Dorsolateral prefrontal cortex (tissue), 120 donors: ENCODE measurements at regions of chr11 and their contacts with region 1.

Region 1: DNA sequence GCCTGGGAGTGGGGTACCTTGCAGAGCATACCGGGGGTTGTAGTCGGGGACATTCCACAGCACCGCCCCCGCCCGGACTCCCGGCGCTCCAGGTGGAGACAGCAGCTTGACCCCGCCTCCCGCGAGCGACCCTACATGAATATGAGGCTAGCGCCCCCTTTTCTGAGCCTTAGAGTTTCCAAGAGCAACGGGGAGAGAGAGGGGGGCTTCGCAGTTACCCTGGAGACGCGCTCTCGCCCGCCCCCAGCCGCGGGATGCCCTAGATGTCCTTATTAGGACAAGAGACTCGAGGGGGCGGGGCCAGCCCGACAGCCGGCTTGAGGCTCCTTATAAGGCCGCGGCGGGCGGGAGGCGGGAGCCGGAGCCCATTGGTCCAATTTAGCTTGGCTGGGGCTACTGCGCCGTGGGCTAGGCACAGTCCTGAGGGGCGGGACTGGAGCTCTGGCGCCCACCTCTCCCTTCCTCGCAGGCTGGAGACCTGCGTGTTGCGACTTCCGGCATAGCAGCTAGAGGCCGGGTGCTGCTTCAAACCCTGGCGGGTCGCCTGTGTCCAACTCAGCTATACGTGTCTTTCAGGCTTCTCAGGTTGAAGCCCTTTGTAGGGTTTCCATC is 927 bp upstream of the MUS81 start:
- DNase-seq: peak; percentile 94 to 99 (median 98)
- H3K4me3 ChIP-seq: peak overlapping the region; percentile 65 to 99 (median 93)
- H3K27ac ChIP-seq: peak overlapping the region; percentile 70 to 99 (median 97)
- H3K27me3 ChIP-seq: no peaks in the 10 kb centered on the region
- CTCF ChIP-seq: peak in 28 of 56 donors; percentile 6 to 56 (median 34)

Region 2: GRCh38 chr11:65833297-65834030 is 25.8 kb before region 1 on chr11 and contains the start of gene SNX32:
- intact Hi-C with region 1: loop called in 1 of 2 experiments (anchors 2 kb)
- DNase-seq: peak; percentile 96 to 99 (median 98)
- H3K4me3 ChIP-seq: peak within 1 kb of the TSS; percentile 48 to 91 (median 74)
- H3K27ac ChIP-seq: peak within 1 kb of the TSS in 34 of 59 donors; percentile 11 to 85 (median 62)
- H3K27me3 ChIP-seq: no peaks in the 10 kb centered on the region
- CTCF ChIP-seq: peak in 16 of 56 donors; percentile 7 to 51 (median 30)
- total RNA-seq, gene SNX32: 18.6 to 78.2 (median 41.0) TPM

Region 3: DNA sequence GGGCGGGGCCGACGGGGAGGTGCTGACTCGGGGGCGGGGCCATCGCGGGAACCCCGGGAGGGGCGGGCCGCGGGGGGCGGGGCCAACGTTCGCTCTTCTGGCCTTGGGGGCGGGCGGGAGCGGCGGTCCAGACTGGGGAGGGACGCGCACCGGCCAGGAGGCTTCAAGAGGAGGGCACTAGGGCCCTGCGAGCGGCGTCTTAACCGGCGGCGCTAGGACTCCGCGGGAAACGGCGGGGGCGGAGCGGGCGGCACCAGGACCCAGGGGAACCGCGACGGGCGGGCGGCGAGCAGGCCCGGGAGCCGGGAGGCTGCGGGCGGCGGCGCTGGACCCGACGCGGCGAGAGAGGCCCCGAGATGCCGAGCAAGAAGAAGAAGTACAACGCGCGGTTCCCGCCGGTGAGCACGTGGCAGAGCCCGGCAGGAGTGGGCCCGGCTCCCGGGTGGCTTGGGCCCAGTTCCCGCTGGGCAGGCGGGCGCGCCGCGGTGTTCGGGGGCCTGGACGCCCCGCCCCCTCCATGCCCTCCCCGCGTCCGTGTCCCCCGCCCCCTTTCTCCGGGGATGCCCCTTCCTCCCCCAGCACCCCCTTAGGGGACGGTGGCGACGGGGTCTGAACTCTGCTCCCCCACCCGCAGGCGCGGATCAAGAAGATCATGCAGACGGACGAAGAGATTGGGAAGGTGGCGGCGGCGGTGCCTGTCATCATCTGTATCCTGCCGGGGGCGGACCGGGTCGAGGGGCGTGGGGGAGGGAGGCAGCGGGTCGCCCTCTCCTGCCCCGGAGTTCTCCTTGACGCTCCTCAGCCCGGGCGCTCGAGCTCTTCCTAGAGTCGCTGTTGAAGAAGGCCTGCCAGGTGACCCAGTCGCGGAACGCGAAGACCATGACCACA is 60.1 kb after region 1 on chr11 and contains the start of gene DRAP1:
- intact Hi-C with region 1: loop called (anchors 2 kb)
- DNase-seq: peak; percentile 97 to 100 (median 100)
- H3K4me3 ChIP-seq: peak within 1 kb of the TSS; percentile 73 to 100 (median 98)
- H3K27ac ChIP-seq: peak within 1 kb of the TSS; percentile 72 to 99 (median 95)
- H3K27me3 ChIP-seq: no peaks in the 10 kb centered on the region
- CTCF ChIP-seq: peak in 37 of 56 donors; percentile 7 to 61 (median 34)
- total RNA-seq, gene DRAP1: 54.9 to 148 (median 96.3) TPM

Region 4: GRCh38 chr11:65988791-65989592 is 129.7 kb after region 1 on chr11:
- intact Hi-C with region 1: no loop called
- DNase-seq: peak; percentile 53 to 97 (median 88)
- H3K4me3 ChIP-seq: peak overlapping the region in 4 of 59 donors; percentile 6 to 26 (median 16)
- H3K27ac ChIP-seq: peak overlapping the region in 19 of 59 donors; percentile 0 to 67 (median 37)
- H3K27me3 ChIP-seq: no peaks in the 10 kb centered on the region
- CTCF ChIP-seq: peak; percentile 74 to 99 (median 95)

Region 5: GRCh38 chr11:66081505-66081904 is 222.2 kb after region 1 on chr11:
- intact Hi-C with region 1: no loop called
- DNase-seq: peak in 2 of 10 donors; percentile 25 to 54
- H3K4me3 ChIP-seq: no peak overlapping the region
- H3K27ac ChIP-seq: peak overlapping the region in 33 of 59 donors; percentile 0 to 76 (median 33)
- H3K27me3 ChIP-seq: no peaks in the 10 kb centered on the region
- CTCF ChIP-seq: no peak